GM12878 (cell line): ENCODE measurements at regions of chr3 and their contacts with region 1.

Region 1: DNA sequence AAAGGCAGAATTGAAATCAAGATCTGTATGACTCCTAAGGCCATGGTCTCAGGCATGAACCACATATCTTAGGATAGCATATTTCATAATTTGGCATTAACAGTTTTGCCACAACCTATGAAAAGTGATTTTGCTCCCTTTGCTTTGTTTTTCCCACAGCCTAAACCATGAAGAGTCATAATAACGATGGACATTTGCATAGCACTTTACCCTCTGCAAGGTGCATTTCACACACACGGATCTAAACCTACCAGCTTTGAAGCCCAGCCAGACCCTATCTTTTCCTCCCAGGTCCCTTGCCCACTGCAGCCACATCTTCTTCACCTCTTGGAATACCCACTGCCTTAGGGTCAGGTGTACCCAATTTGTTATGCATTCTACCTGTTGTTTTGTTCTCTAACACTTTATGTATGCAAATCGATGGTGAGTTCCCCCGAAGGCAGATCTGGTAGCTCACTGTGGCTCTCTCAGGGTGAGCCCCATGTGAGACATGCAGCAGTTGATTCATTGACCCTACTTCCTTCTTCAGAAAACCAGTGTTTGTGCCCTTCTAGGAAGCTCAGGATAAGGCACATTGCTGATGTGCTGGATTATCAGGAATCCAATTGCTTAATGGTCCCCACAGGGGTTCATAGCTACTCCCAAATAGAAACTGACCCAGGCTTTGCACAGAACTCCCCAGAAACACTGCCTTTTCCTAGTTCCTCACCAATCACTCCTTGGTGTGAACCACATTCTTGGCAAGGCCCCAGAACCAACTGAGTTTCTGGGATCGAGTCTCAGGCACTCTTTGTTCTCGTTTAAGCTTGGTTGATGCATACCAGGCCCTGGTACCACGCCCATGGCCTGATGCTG is 8.7 kb downstream of the ARHGAP31 start:
- DNase-seq: no peak
- ATAC-seq: peak; percentile 63
- H3K4me3 ChIP-seq: peak overlapping the region; percentile 13; the same call in 1 of the 2 replicates
- H3K27ac ChIP-seq: peak overlapping the region; percentile 62
- H3K4me1 ChIP-seq: peaks cover 49% of the 10 kb centered on the region
- H3K27me3 ChIP-seq: no peaks in the 10 kb centered on the region
- CTCF ChIP-seq: no peak
- EP300 ChIP-seq: no peak
- POLR2A ChIP-seq: no peak
- RAD21 ChIP-seq: no peak

Region 2: DNA sequence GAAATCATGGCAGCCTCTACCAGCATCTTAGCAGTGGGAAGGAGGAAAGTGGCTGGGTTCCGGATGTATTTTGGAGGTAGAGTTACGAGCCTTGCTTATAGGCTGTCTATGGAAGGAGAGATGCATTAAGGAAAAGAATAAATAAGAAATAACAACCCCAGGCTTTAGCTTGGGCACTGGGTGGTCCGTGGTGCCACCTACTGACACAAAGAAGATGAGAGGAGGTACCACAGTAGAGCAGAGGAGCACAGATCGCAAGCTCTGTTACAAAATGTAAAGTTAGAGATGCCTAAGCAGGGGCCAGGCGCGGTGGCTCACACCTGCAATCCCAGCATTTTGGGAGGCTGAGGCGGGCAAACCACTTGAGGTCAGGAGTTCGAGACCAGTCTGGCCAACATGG is 85.7 kb after region 1 on chr3:
- CTCF ChIA-PET with region 1: no interaction called
- POLR2A ChIA-PET with region 1: no interaction called
- RAD21 ChIA-PET with region 1: no interaction called
- SMC1A ChIA-PET with region 1: no interaction called
- in situ Hi-C with region 1: no loop called
- intact Hi-C with region 1: no loop called
- DNase-seq: no peak
- ATAC-seq: no peak
- H3K4me3 ChIP-seq: no peak overlapping the region
- H3K27ac ChIP-seq: no peak overlapping the region
- H3K4me1 ChIP-seq: no peaks in the 10 kb centered on the region
- H3K27me3 ChIP-seq: no peaks in the 10 kb centered on the region
- CTCF ChIP-seq: no peak; a peak in 1 of 6 replicates
- EP300 ChIP-seq: no peak
- POLR2A ChIP-seq: no peak
- RAD21 ChIP-seq: no peak

Region 3: GRCh38 chr3:119695480-119695879 is 392.6 kb after region 1 on chr3:
- CTCF ChIA-PET with region 1: no interaction called
- POLR2A ChIA-PET with region 1: interaction called, 10 read pairs
- RAD21 ChIA-PET with region 1: no interaction called
- SMC1A ChIA-PET with region 1: no interaction called
- in situ Hi-C with region 1: loop called (anchors 25 kb)
- intact Hi-C with region 1: no loop called
- DNase-seq: no peak
- ATAC-seq: no peak
- H3K4me3 ChIP-seq: no peak overlapping the region
- H3K27ac ChIP-seq: no peak overlapping the region
- H3K4me1 ChIP-seq: peaks cover 20% of the 10 kb centered on the region
- H3K27me3 ChIP-seq: no peaks in the 10 kb centered on the region
- CTCF ChIP-seq: no peak
- EP300 ChIP-seq: no peak
- POLR2A ChIP-seq: no peak
- RAD21 ChIP-seq: no peak